ENCODE measurements at regions of chr2 and their contacts with region 1.

Region 1: DNA sequence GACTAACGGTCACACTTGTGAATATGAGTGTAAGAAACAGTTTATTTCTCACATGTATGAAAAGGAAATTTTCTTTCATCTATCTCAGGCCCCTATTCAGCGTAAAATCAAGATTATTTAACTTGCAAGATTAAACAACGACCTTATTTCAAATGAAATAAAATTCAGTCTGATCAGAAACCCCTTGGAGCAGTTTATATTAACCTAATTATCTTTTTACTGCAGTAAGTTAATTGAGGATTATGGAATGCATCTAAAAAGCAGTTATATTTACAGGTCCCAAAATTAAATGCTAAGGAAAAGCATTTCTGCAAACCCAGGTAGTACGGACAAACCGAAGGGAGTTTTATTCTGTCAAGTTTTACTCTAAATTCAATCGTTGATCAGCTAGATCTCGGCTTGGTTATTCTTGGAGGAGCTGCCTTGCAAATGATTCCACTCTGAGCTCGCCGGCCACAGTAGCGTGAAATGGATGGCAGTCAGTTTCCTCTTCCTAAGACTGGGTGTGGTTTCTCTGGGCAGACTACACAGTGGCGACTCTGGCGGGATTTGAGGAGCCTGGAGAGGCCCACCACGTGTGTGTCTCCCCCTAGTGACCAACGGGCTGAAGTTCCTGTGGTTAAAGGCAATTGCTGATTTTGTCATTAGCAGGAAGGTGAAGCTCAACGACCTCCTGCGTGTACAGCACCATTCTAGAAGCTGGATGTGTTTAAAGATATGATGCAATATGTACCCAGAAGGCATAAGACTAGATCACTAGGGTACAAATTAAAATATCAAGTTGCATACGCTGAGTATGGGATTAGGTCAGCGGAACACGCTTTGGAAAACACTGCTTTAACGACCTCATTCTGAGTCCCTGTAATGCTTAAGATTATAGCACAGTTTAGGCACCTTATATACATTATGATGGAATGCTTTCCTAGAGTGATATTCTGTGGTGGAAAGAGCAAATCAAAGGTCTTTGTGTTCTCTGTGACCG is 36.4 kb downstream of the PRKRA start:
- DNase-seq: peak; percentile 91
- H3K4me3 ChIP-seq: peak overlapping the region; percentile 58
- CTCF ChIP-seq: peak; percentile 96

Region 2: DNA sequence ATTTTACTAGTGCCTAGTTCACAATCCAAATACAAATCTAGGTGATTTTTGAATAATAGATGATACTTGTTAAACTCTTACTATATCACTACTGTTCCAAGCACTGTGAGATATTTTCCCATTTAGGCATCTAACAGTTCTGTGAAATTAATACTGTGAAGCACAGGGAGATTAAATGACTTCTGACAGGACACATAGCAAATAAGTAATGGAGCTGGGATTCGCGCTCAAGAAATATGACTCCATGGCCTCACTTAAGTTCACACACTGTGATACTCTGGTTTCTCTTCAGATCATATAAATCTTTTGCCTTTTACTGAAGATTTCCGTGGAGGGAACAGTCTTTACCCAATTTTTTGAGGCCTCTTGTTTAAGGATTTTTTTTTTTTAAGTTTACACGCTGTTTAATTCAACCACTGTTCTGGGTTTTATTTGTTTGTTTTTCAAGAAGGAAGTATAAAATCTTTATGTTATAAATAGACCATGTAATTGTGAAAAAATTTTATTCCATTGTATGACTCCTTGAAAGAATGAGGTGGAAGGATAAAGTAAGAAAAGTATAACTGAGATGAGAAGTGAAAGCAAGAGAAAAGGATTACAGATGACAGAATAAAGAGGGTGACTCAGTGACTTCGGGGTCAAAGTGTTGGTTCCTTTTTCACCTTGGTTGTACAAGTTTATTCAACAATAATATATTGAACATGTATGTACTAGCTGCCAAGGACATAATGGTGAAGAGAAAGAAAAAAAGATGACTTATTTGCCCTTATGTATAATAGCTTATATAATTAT is 272.1 kb before region 1 on chr2:
- in situ Hi-C with region 1: loop called (anchors 25 kb)
- DNase-seq: no peak
- H3K4me3 ChIP-seq: no peak overlapping the region
- CTCF ChIP-seq: no peak

Region 3: GRCh38 chr2:178363252-178363651 is 51.3 kb before region 1 on chr2:
- in situ Hi-C with region 1: no loop called
- DNase-seq: no peak
- H3K4me3 ChIP-seq: no peak overlapping the region
- CTCF ChIP-seq: no peak

Region 4: GRCh38 chr2:178484245-178485041 is 69.9 kb after region 1 on chr2:
- in situ Hi-C with region 1: no loop called
- DNase-seq: no peak
- H3K4me3 ChIP-seq: no peak overlapping the region
- CTCF ChIP-seq: no peak

Region 5: GRCh38 chr2:178700136-178700535 is 285.6 kb after region 1 on chr2:
- in situ Hi-C with region 1: no loop called
- DNase-seq: peak; percentile 8
- H3K4me3 ChIP-seq: no peak overlapping the region
- CTCF ChIP-seq: no peak